Activated CD8-positive, alpha-beta T cell treated with anti-CD3 and anti-CD28 coated beads, Interleukin-2, amount 10 ng/mL, durations not matched to agents 7 days and 5 days (primary cell): ENCODE measurements at regions of chr16 and their contacts with region 1.

Region 1: GRCh38 chr16:30844671-30845449 is 49.0 kb downstream of the BCL7C start:
- DNase-seq: peak; percentile 93
- ATAC-seq: peak; percentile 93
- H3K4me3 Mint-ChIP-seq: peak overlapping the region; percentile 56
- H3K27ac Mint-ChIP-seq: peak overlapping the region; percentile 85
- H3K4me1 Mint-ChIP-seq: peaks cover 18% of the 10 kb centered on the region
- H3K27me3 Mint-ChIP-seq: no peaks in the 10 kb centered on the region

Region 2: GRCh38 chr16:30382111-30382881 is 462.6 kb before region 1 on chr16 and contains the start of gene SEPTIN1:
- CTCF ChIA-PET with region 1: no interaction called
- POLR2A ChIA-PET with region 1: no interaction called
- DNase-seq: peak; percentile 91
- ATAC-seq: peak; percentile 52
- H3K4me3 Mint-ChIP-seq: peak within 1 kb of the TSS; percentile 90
- H3K27ac Mint-ChIP-seq: peak within 1 kb of the TSS; percentile 93
- H3K4me1 Mint-ChIP-seq: peaks cover 59% of the 10 kb centered on the region
- H3K27me3 Mint-ChIP-seq: no peaks in the 10 kb centered on the region
- total RNA-seq, gene SEPTIN1: 321 to 342 TPM

Region 3: DNA sequence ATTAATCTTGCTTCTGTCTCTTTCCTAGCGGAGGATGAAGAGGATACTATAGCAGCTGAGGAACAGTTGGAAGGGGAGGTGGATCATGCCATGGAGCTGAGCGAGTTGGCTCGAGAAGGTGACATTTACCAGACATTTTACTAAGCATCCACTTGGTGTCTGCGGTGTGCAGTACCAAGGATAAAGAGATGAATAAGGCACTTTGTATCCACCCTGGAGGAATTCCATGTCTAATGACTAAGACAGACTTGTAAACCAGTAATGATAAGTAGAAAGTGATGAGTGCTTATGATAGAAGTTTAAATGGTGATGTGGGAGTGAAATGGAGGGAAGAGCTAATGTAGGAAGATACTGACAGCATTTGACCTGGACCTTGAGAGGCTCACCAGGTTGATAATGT is 133.9 kb before region 1 on chr16:
- CTCF ChIA-PET with region 1: no interaction called
- POLR2A ChIA-PET with region 1: no interaction called
- DNase-seq: no peak
- ATAC-seq: no peak
- H3K4me3 Mint-ChIP-seq: no peak overlapping the region
- H3K27ac Mint-ChIP-seq: no peak overlapping the region
- H3K4me1 Mint-ChIP-seq: peaks cover 24% of the 10 kb centered on the region
- H3K27me3 Mint-ChIP-seq: no peaks in the 10 kb centered on the region

Region 4: DNA sequence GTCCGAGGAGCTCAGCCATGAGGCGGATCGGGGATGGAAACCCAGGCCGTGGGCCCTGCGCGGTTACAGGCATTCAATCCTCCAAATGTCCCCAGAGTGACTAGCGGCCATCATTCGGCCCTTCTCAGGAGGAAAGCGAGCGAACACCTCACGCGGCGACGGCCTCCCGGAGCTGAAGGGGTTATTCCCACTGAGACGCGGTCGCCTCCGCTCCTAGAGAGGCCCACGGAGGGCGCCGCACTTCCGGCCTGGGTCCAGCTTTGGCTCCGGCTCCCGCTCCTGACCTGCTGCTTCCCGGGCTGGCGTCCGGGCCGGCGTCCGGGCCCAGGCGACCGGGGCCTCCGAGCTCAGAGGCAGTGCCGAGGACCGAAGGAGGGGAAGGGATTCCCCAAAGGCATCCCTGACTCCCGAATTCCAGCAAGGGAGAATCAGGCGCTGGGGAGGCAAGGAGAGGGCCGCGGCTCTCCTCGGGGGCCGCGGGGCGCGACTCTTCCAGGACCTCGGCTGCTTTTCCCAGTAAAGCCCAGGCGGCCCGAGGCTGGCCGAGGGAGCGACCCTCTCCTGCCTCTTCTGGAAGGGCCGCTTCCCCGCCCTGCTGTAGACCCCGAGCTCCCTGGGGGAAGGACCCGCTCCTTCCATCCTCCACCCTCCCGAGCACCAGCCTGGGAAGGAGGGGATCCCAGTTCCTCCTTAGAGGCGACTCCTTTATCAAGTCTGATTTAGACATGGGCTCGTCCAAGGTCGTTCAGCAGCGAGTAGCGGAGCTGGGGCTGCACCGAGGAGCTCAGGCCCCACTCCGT is 39.3 kb before region 1 on chr16:
- CTCF ChIA-PET with region 1: interaction called, 19 read pairs
- POLR2A ChIA-PET with region 1: interaction called, 3 read pairs
- DNase-seq: peak; percentile 34
- ATAC-seq: peak; percentile 71
- H3K4me3 Mint-ChIP-seq: peak overlapping the region; percentile 57
- H3K27ac Mint-ChIP-seq: peak overlapping the region; percentile 28
- H3K4me1 Mint-ChIP-seq: peaks cover 29% of the 10 kb centered on the region
- H3K27me3 Mint-ChIP-seq: peaks cover 9% of the 10 kb centered on the region

Region 5: GRCh38 chr16:30829130-30830071 is 15.5 kb before region 1 on chr16:
- CTCF ChIA-PET with region 1: interaction called, 12 read pairs
- POLR2A ChIA-PET with region 1: no interaction called
- DNase-seq: no peak
- ATAC-seq: no peak
- H3K4me3 Mint-ChIP-seq: no peak overlapping the region
- H3K27ac Mint-ChIP-seq: no peak overlapping the region
- H3K4me1 Mint-ChIP-seq: no peaks in the 10 kb centered on the region
- H3K27me3 Mint-ChIP-seq: peaks cover 18% of the 10 kb centered on the region

Region 6: GRCh38 chr16:30874821-30875717 is 30.2 kb after region 1 on chr16:
- CTCF ChIA-PET with region 1: interaction called, 63 read pairs
- POLR2A ChIA-PET with region 1: interaction called, 8 read pairs
- DNase-seq: peak; percentile 90
- ATAC-seq: peak; percentile 91
- H3K4me3 Mint-ChIP-seq: peak overlapping the region; percentile 94
- H3K27ac Mint-ChIP-seq: peak overlapping the region; percentile 86
- H3K4me1 Mint-ChIP-seq: peaks cover 33% of the 10 kb centered on the region
- H3K27me3 Mint-ChIP-seq: no peaks in the 10 kb centered on the region

Region 7: GRCh38 chr16:30902029-30902972 is 57.4 kb after region 1 on chr16:
- CTCF ChIA-PET with region 1: interaction called, 127 read pairs
- POLR2A ChIA-PET with region 1: interaction called, 33 read pairs
- DNase-seq: peak; percentile 70
- ATAC-seq: peak; percentile 85
- H3K4me3 Mint-ChIP-seq: peak overlapping the region; percentile 90
- H3K27ac Mint-ChIP-seq: peak overlapping the region; percentile 99
- H3K4me1 Mint-ChIP-seq: peaks cover 48% of the 10 kb centered on the region
- H3K27me3 Mint-ChIP-seq: no peaks in the 10 kb centered on the region

Region 8: DNA sequence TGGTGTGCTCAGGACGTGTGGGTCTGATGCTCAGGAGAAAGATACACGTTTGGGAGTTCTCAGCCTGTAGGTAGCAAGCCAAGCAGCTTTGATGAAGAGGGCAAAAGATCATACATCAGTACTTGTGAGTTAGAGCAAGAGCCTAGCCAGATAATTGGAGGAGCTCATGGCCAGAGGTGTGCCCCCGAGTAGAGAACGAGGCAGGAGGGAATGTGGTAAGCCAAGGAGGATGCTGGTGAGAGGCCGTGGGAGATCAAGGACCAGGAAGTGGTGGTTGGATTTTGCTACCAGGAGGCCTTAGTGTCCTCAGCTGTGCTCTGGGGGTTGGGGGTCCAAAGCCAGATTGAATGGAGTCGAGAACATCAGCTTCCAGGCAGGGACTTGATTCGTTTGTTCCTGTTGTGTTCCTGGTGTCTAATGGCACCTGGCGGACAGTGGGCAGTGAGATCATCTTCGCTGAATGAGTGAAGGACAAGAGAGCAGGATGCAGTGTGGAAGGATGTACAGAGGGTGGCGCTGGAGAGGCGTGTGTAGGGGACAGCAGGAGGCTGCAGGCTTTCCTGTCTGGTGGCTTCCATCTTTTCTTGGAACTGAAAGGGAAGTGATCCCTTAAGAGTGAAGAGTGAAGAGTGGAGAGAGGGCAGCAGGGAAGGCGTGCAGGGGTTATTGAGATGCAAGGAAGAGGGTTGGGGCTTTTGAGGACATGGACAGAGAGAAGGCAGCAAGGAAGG is 90.1 kb after region 1 on chr16:
- CTCF ChIA-PET with region 1: interaction called, 62 read pairs
- POLR2A ChIA-PET with region 1: interaction called, 5 read pairs
- DNase-seq: peak; percentile 63
- ATAC-seq: peak; percentile 52
- H3K4me3 Mint-ChIP-seq: no peak overlapping the region
- H3K27ac Mint-ChIP-seq: peak overlapping the region; percentile 15
- H3K4me1 Mint-ChIP-seq: peaks cover 37% of the 10 kb centered on the region
- H3K27me3 Mint-ChIP-seq: no peaks in the 10 kb centered on the region

Region 9: GRCh38 chr16:30948667-30949649 is 104.1 kb after region 1 on chr16 and contains the start of gene ORAI3:
- CTCF ChIA-PET with region 1: interaction called, 10 read pairs
- POLR2A ChIA-PET with region 1: no interaction called
- DNase-seq: peak; percentile 61
- ATAC-seq: peak; percentile 66
- H3K4me3 Mint-ChIP-seq: peak within 1 kb of the TSS; percentile 96
- H3K27ac Mint-ChIP-seq: peak within 1 kb of the TSS; percentile 82
- H3K4me1 Mint-ChIP-seq: peaks cover 31% of the 10 kb centered on the region
- H3K27me3 Mint-ChIP-seq: no peaks in the 10 kb centered on the region
- total RNA-seq, gene ORAI3: 21.4 to 23.1 TPM

Region 10: GRCh38 chr16:31108035-31108793 is 263.4 kb after region 1 on chr16 and contains the start of gene BCKDK:
- CTCF ChIA-PET with region 1: no interaction called
- POLR2A ChIA-PET with region 1: no interaction called
- DNase-seq: peak; percentile 83
- ATAC-seq: peak; percentile 89
- H3K4me3 Mint-ChIP-seq: peak within 1 kb of the TSS; percentile 80
- H3K27ac Mint-ChIP-seq: peak within 1 kb of the TSS; percentile 86
- H3K4me1 Mint-ChIP-seq: peaks cover 31% of the 10 kb centered on the region
- H3K27me3 Mint-ChIP-seq: no peaks in the 10 kb centered on the region
- total RNA-seq, gene BCKDK: 38.9 TPM